ENCODE measurements at regions of chr7 and their contacts with region 1.

Region 1: DNA sequence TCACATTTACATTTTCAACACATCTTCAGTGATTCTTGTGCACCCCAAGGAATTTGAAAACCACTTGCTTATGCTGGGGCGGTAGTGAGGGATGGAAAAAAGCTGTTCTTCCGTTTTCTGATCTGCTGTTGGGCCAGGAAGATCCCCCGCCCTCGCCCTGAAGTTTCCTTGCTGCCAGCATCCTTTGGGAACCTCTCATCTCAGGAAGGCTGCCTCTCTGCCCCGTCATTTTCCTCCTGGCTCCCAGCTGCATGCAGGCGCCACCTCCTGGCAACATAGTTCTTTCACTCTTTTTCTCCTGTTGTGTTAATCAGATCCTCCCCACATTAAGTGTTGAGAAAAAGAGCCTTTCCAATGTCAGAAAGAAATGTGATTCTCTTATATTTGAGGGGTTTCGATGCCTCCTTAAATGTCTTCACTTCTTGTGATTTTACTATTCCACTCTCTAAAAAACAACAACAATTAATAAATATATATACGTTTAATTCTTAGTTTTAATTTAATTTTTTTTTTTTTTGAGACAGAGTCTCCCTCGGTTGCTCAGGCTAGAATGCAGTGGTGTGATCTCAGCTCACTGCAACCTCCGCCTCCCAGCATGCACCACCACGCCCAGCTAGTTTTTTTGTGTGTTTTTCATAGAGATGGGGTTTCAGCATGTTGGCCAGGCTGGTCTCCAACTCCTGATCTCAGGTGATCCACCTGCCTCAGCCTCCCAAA is 122.9 kb downstream of the RALA start:
- H3K4me3 ChIP-seq: no peak overlapping the region
- H3K27ac ChIP-seq: no peak overlapping the region
- H3K4me1 ChIP-seq: no peaks in the 10 kb centered on the region
- CTCF ChIP-seq: peak; percentile 62; the same call in 1 of the 2 replicates

Region 2: DNA sequence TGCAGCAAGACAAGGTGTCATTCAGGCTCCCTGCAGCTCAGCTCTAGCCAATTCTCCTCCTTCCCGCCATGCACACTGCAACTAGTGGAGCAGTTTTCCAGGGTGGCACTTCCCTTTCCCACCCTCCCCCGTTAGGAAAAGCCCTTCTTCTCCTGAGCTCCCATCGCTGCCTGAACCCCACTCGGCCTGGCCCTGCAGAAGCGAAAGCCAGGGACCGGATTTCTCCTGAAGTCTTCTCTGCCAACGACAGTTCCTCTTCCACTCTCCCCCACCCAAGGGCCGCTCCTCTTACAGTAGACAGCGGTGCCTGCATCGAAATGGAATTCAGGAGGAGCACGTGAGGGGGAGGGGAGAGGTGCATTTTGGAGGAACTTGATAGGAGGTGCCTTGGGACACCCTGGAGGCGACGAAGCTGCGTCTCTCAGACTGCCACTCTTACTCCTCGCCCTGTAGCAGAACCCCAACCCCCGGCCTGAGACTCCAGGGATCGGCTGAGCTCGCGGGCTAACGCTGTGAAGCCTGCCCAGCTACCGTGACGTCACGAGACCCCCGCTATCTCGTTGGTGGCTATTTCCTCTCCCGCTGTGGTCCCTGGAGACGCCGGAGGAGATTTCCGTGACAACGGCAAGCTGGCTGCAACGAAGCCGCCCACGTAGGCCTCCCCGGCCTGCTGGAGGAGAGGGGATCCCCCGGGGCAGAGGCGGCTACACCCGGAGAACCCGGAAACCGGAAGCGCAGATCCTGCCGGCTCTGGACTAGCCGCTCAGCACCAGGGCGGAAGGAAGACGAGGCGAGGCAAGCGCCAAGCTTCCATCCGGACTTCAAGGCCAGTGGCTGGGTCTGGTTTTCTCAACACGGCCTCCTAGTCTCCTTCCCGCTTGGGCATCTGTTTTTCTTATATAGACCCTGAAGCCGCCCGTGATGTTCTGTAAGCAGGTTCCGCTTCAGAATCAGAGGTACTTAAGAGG is 13.1 kb before region 1 on chr7:
- CTCF ChIA-PET with region 1: interaction called, 24 read pairs
- POLR2A ChIA-PET with region 1: interaction called, 4 read pairs
- H3K4me3 ChIP-seq: peak overlapping the region; percentile 58
- H3K27ac ChIP-seq: peak overlapping the region; percentile 83
- H3K4me1 ChIP-seq: peaks cover 11% of the 10 kb centered on the region
- CTCF ChIP-seq: no peak

Region 3: DNA sequence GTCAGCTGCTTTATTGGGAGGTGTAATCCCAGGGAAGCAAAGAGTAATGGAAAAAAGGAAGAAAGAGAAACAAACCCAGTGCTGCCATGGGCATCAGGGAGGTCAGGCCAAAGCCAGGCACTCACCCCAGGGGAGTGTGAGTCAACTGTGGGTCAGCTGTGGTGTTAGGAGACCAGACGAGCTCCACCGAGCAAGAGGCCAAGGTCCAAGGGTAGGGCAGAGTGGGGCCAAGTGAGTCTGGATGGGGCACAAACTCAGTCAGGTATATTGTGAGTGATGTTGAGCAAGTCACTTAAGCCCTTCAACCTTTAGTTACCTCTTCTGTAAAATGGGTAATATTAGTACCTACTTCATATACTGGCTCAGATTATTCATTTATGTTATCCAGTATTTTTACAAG is 173.4 kb after region 1 on chr7:
- CTCF ChIA-PET with region 1: interaction called, 11 read pairs
- POLR2A ChIA-PET with region 1: no interaction called
- H3K4me3 ChIP-seq: no peak overlapping the region
- H3K27ac ChIP-seq: no peak overlapping the region
- H3K4me1 ChIP-seq: no peaks in the 10 kb centered on the region
- CTCF ChIP-seq: no peak

Region 4: DNA sequence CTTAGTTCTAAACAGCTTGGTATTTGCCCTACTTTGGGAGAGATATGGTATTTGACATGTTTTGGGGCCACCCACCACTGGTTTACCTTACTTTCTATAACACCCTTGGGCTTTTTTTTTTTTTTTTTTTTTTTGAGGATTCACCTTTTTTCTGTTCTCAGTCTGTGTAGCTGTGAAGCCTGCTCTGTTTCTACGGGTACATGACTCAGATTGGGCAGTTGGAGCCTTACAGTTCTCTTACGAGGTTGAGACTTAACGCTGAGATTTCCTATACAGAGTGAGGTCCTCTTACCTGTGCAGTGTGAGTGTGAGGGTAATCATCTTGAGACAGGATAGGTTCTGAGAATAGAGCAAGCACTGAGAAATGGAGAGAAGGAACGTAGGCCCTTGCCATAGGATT is 281.3 kb after region 1 on chr7:
- CTCF ChIA-PET with region 1: no interaction called
- POLR2A ChIA-PET with region 1: no interaction called
- H3K4me3 ChIP-seq: no peak overlapping the region
- H3K27ac ChIP-seq: no peak overlapping the region
- H3K4me1 ChIP-seq: no peaks in the 10 kb centered on the region
- CTCF ChIP-seq: no peak